ENCODE measurements at regions of chr7 and their contacts with region 1.

Region 1: GRCh38 chr7:131654668-131655326 is 98.4 kb upstream of the PODXL start:
- DNase-seq: peak; percentile 90
- ATAC-seq: peak; percentile 89 to 90

Region 2: DNA sequence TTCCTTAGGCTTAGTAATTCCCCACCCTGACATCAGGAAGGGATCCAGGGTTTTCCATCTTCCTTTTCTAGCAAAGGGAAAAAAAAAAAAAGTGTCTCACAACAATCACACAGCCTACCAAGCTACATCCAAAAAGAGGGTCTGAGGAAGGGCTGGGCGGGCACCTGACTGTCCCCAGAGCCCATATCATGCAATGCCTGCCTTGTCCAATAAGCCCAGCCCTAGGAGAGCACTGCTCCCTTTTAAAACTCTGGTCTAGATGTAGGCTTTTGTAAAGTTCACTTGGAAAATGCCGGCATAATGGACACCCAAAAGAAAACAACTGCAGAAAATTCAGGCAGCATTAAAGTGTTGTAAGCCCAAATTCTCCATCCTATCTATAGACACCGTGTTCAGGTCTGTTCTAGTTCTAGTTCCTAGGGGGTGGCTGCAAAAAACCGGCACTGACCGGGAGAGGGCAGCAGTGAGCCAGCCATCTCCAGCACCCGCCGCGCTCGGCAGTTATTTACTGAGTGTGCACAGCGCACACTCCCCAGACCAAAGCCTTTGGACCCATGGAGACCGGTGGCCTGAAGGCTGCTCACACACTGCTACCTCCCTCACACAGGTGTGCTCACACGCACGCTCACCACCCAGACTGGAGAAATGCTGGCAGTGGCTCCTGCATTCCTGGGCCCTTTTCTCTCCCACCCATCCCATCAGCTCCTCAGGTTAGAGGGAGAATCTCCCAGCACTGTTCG is 147.0 kb before region 1 on chr7:
- intact Hi-C with region 1: loop called (anchors 1 to 2 kb)
- DNase-seq: peak; percentile 88
- ATAC-seq: peak; percentile 66 to 79

Region 3: DNA sequence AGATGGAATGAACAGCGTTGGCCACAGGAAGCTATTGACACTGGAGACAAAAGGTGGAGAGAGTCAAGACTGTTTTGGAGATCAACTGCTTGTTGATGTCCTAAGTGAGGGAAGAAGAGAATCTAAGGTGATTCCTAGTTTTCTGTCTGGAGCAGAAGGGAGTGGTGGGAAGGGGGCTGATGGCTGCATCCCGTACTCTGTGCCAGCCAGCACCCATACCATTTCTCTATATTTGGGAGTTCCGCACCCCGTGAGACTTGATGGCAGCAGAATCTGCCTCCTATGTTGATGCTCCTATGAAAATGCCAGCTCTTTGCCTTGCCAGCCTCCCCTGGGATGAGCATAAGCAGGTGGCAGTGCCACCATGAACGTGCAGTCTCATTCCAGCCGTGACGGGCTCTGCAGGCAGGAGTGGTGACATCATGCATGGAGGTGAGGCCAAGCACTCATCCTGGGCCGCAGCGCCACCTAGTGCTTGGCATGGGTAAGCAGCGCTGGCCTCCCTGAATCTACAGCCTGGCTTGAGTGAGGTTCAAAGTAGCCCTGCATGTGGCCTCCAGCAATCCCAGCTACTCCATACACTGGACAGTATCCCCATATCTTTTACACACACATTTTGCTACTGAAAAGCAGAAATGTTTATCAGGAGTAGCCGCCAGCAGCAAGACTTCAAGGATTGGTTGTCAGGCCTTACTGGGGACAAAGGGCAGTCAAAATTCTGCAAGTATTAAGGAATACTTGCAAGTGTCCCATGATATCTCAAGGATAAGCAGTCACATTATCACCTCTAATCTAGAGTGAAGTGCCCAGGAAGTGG is 141.3 kb before region 1 on chr7:
- intact Hi-C with region 1: loop called (anchors 1 to 2 kb)
- DNase-seq: peak; percentile 84
- ATAC-seq: peak; percentile 94 to 95

Region 4: GRCh38 chr7:131524115-131524514 is 130.7 kb before region 1 on chr7:
- intact Hi-C with region 1: no loop called
- DNase-seq: no peak
- ATAC-seq: no peak

Region 5: GRCh38 chr7:131546583-131547111 is 108.2 kb before region 1 on chr7:
- intact Hi-C with region 1: loop called (anchors 2 to 10 kb)
- DNase-seq: no peak
- ATAC-seq: no peak

Region 6: DNA sequence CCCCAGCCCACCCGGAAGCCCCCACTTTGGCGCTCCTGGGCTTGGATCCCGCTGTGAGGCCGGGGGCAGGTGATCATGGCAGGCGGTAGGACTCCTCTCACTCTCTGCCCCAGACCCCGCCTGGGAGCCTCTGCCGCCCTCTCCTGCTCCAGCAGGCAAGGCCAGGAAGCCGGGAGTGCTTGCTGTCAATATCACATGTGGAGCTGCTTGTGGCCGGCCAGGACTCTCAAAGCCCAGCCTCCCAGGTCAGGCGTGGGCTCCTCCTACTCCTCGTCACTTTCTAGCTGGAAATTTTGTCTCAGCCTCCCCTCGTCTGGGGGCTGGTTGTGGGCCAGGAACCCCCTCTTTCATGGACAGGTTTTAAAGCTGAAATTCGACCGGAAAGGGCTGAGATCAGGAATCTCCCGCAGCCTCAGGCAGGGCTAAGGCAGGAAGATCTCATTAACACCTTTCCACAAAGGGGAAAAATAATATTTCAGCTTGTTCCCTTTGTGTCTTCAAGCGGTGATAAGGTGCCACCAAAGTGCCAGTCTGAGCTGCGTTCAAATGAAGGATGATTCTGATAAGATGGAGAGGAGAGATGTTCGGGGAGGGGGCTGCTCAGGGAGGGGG is 175.3 kb after region 1 on chr7:
- intact Hi-C with region 1: no loop called
- DNase-seq: peak; percentile 33
- ATAC-seq: peak in 1 of 2 donors; percentile 54

Measured in left cardiac atrium (tissue), 4 donors.